WTC11 (cell line): ENCODE measurements at regions of chr2 and their contacts with region 1.

Region 1: DNA sequence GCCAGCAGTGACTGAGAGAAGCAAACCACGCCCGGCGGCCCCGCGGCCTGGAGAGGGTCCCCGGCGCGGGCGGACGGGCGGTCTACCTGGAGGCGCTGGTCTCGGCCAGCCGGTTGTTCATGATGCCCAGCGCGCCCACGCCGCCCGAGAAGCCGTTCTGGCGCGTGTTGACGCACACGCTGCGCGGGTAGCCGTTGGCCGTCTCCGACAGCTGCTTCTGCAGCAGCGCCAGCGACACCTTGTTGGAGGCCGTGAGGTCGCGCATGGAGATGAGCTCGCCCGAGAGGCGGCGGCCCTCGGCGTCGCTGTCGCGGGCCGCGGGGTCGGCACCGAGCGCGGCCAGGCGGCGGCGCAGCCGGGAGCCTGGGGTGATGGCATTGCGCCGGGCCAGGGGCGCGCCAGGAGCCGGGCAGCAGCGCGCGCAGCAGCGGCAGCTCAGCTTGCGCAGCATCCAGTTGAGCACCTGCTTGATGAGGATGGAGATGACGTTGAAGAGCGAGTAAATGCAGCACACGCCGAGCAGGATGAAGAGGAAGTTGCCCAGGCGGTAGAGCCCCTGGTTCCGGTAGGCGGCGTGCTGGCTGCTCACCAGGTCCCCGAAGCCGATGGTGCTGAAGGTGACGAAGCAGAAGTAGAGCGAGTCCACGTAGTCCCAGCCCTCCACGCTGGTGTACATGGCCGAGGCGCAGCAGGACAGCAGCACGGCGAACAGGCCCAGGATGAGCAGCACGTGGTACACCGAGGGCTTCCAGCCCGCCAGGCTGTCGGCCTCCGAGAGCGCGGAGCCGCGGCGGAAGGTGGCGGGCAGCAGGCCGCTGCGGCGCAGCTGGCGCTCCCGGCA is 118.1 kb downstream of the MSH2 start:
- DNase-seq: peak; percentile 62
- ATAC-seq: peak; percentile 69
- H3K4me3 Mint-ChIP-seq: peak overlapping the region; percentile 45
- H3K27ac Mint-ChIP-seq: no peak overlapping the region
- H3K4me1 Mint-ChIP-seq: peaks cover 21% of the 10 kb centered on the region
- H3K27me3 Mint-ChIP-seq: peaks cover 3% of the 10 kb centered on the region; the same call in 1 of the 2 replicates
- CTCF ChIP-seq: no peak; the same call in 1 of the 2 replicates

Region 2: GRCh38 chr2:47798631-47799030 is 277.6 kb after region 1 on chr2:
- CTCF ChIA-PET with region 1: no interaction called
- POLR2A ChIA-PET with region 1: interaction called, 12 read pairs
- DNase-seq: no peak
- ATAC-seq: no peak
- H3K4me3 Mint-ChIP-seq: no peak overlapping the region
- H3K27ac Mint-ChIP-seq: no peak overlapping the region; the same call in 1 of the 2 replicates
- H3K4me1 Mint-ChIP-seq: no peaks in the 10 kb centered on the region
- H3K27me3 Mint-ChIP-seq: no peaks in the 10 kb centered on the region
- CTCF ChIP-seq: no peak